ENCODE measurements at regions of chr7 and their contacts with region 1.

Region 1: DNA sequence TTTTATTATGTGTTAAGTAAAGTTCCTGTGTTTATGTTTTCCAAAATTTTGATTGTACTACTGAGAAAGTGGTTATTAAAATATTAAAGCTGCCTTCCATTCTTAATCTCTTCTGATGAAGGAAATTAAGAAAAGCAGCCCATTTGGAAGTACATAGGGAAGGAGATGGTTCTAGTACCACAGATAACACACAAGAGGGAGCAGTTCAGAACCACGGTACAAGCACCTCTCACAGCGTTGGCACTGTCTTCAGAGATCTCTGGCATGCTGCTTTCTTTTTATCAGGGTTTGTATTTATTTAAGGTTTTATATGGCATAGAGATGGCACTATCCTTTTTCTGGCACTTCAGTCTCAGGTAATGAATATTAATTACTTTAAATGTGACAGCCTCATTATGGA is 111.6 kb downstream of the PHTF2 start:
- DNase-seq: no peak
- CTCF ChIP-seq: no peak

Region 2: GRCh38 chr7:77798394-77799077 is 111.6 kb before region 1 on chr7 and contains the starts of genes PHTF2 and TMEM60:
- in situ Hi-C with region 1: loop called (anchors 10 kb)
- DNase-seq: peak; percentile 93
- CTCF ChIP-seq: peak; percentile 37

Region 3: DNA sequence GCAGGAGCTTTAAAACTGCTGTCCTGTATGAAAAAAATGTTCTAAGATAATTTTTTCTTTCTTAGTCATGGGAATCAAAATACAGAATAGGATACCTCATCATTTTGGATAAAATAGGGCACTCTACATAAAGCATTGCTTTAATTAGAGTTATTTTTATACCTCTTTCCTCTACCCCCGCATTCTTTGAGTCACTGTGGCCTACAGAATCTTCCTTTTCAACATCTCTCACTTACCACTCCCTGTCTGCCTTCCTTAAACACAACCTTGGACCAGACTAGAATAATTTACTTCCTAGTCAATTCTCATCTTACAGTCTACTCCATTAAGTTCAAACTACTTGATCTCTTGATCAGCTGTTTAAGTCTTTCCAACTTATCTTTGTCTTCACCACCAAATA is 350.7 kb after region 1 on chr7:
- in situ Hi-C with region 1: no loop called
- DNase-seq: no peak
- CTCF ChIP-seq: no peak

Measured in GM13977 (cell line).